CD8-positive, alpha-beta memory T cell (primary cell): ENCODE measurements at regions of chr1 and their contacts with region 1.

Region 1: DNA sequence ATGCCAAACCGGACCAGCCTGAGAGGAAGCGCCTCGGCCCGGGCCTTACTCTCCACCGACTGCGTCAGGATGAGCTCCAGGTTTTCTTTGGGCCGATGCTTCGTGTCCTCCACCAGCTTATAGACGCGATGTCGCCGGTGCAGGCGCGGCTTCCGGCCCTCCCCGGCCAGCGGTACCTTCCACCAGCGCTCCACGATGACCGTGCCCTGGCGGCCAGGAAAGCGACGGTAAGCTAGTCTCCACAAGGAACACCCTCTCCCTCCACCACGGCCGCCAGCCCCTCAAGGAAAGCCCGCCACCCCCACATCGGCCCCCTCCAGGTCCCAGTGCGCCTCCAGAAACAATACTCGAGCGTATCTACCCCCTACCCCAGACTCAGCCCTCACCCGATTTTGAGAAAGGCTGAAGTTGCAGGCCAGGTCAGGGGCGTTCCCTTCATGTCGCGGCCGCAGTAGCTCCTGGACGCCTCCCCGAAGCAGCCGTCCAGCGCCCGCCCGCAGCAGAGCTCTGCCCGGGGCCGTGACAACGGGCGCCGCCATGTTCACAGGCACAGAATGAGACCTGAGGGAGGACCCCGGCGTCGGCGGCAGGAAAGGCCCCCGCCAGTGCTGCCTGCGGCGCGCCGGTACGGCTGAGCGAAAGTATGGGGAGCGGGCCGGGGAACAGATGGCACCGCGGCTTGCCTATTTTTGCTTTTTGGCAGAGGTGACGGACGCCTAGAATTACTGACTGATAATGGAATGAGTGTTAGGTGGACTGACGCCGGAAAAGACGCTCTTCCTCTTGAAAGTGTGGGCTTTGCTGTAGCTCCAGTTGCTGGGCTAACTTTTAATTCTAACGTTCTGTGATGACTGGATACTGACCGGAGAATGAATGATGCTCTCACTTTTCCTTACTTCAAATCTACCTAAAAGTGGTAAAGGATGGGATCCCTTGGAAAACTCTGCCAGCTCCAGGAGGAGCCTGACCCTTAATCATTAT is at the start of gene MRPL9:
- DNase-seq: peak; percentile 71 to 87 (median 77)
- H3K4me3 ChIP-seq: peak within 1 kb of the TSS; percentile 81
- H3K4me3 Mint-ChIP-seq: peak within 1 kb of the TSS; percentile 83 to 98 (median 92)
- H3K27ac ChIP-seq: peak within 1 kb of the TSS; percentile 86
- H3K27ac Mint-ChIP-seq: peak within 1 kb of the TSS; percentile 84 to 99 (median 98)
- H3K4me1 ChIP-seq: peaks cover 12% of the 10 kb centered on the region
- H3K4me1 Mint-ChIP-seq: peaks cover 19 to 29% (median 23%) of the 10 kb centered on the region in 3 donors
- H3K27me3 ChIP-seq: no peaks in the 10 kb centered on the region
- H3K27me3 Mint-ChIP-seq: no peaks in the 10 kb centered on the region
- total RNA-seq, gene MRPL9: 190 to 195 TPM

Region 2: DNA sequence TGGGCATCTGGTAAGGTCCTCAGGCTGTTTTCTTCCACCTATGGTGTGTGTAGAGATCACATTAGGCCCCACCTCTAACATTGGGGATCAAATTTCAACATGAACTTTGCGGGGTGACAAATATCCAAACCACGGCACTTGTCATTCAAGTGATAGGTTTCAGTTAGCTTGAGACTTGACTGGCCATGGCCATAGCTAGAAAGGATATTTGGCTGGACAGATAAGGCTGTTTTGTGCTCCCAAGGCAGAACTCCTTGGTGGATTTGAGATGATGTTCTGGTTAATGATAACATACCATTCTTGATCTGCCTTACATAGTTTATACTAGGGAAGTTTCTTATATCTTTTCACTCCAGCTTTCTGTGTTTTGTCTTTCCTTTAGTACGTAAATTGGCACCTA is 95.1 kb before region 1 on chr1:
- CTCF ChIA-PET with region 1: no interaction called
- POLR2A ChIA-PET with region 1: no interaction called
- DNase-seq: no peak
- H3K4me3 ChIP-seq: no peak overlapping the region
- H3K4me3 Mint-ChIP-seq: no peak overlapping the region
- H3K27ac ChIP-seq: no peak overlapping the region
- H3K27ac Mint-ChIP-seq: peak overlapping the region in 2 of 8 donors; percentile 20 to 61
- H3K4me1 ChIP-seq: no peaks in the 10 kb centered on the region
- H3K4me1 Mint-ChIP-seq: peaks cover 10 to 31% (median 11%) of the 10 kb centered on the region in 3 donors
- H3K27me3 ChIP-seq: no peaks in the 10 kb centered on the region
- H3K27me3 Mint-ChIP-seq: no peaks in the 10 kb centered on the region

Region 3: DNA sequence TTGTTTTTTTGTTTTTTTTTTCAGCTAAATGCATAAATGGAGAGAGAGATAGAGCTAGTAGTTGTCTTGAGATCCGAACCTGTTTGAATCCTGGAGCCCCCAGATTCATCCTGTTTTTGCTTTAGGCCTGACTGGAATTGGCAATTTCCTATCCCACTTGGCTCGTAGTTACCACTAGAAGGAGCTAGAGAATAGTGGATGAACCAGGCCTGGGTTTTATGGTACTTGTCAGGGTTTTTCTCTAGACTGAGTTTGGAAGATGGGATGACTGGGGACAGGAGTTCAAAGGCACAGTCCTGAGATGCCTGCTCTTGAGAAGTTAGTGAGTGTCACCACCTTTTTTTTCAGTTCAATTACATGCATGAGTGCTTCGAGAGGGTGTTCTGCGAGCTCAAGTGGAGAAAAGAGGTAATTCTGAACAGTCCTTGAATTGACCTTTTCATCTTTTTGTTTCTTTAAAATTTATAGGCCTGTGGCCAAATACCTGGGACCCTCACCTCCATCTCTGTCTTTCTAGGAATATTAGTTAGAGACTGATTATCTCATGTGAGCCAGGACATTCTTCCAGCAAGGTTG is 70.1 kb before region 1 on chr1:
- CTCF ChIA-PET with region 1: no interaction called
- POLR2A ChIA-PET with region 1: no interaction called
- DNase-seq: no peak
- H3K4me3 ChIP-seq: no peak overlapping the region
- H3K4me3 Mint-ChIP-seq: no peak overlapping the region
- H3K27ac ChIP-seq: no peak overlapping the region
- H3K27ac Mint-ChIP-seq: no peak overlapping the region
- H3K4me1 ChIP-seq: no peaks in the 10 kb centered on the region
- H3K4me1 Mint-ChIP-seq: peaks cover 5 to 6% (median 6%) of the 10 kb centered on the region in 3 donors
- H3K27me3 ChIP-seq: no peaks in the 10 kb centered on the region
- H3K27me3 Mint-ChIP-seq: no peaks in the 10 kb centered on the region

Region 4: GRCh38 chr1:151790071-151790940 is 27.1 kb after region 1 on chr1 and contains the start of gene TDRKH:
- CTCF ChIA-PET with region 1: interaction called, 6 read pairs
- POLR2A ChIA-PET with region 1: interaction called, 14 read pairs
- DNase-seq: peak; percentile 96 to 99 (median 99)
- H3K4me3 ChIP-seq: peak within 1 kb of the TSS; percentile 99
- H3K4me3 Mint-ChIP-seq: peak within 1 kb of the TSS; percentile 88 to 99 (median 95)
- H3K27ac ChIP-seq: peak within 1 kb of the TSS; percentile 66
- H3K27ac Mint-ChIP-seq: peak within 1 kb of the TSS; percentile 71 to 96 (median 86)
- H3K4me1 ChIP-seq: peaks cover 16% of the 10 kb centered on the region
- H3K4me1 Mint-ChIP-seq: peaks cover 34 to 46% (median 34%) of the 10 kb centered on the region in 3 donors
- H3K27me3 ChIP-seq: no peaks in the 10 kb centered on the region
- H3K27me3 Mint-ChIP-seq: peaks cover 0 to 3% of the 10 kb centered on the region in 2 donors
- total RNA-seq, gene TDRKH: 16.4 to 17.4 TPM